ENCODE measurements at regions of chr17 and their contacts with region 1.

Region 1: GRCh38 chr17:35063514-35064223 is at the start of gene RFFL:
- DNase-seq: peak; percentile 60 to 95 (median 84)
- ATAC-seq: peak; percentile 99 to 100 (median 100)
- H3K4me3 ChIP-seq: peak within 1 kb of the TSS; percentile 41 to 42
- H3K4me3 Mint-ChIP-seq: peak within 1 kb of the TSS; percentile 52 to 76 (median 70)
- H3K27ac ChIP-seq: peak within 1 kb of the TSS; percentile 80
- H3K27ac Mint-ChIP-seq: peak within 1 kb of the TSS; percentile 90 to 96
- H3K4me1 ChIP-seq: peaks cover 15 to 27% of the 10 kb centered on the region in 2 experiments
- H3K4me1 Mint-ChIP-seq: peaks cover 71 to 77% (median 72%) of the 10 kb centered on the region in 3 donors
- H3K27me3 ChIP-seq: no peaks in the 10 kb centered on the region
- H3K27me3 Mint-ChIP-seq: no peaks in the 10 kb centered on the region
- total RNA-seq, gene RFFL: 51.3 to 80.2 (median 74.1) TPM

Region 2: GRCh38 chr17:34980681-34981537 is 82.8 kb before region 1 on chr17:
- CTCF ChIA-PET with region 1: interaction called, 3 to 10 read pairs
- POLR2A ChIA-PET with region 1: interaction called in 1 of 2 experiments, 5 read pairs
- DNase-seq: peak in 34 of 35 experiments; percentile 43 to 85 (median 64)
- ATAC-seq: peak; percentile 88 to 93 (median 90)
- H3K4me3 ChIP-seq: peak overlapping the region; percentile 79 to 93
- H3K4me3 Mint-ChIP-seq: peak overlapping the region; percentile 79 to 93 (median 92)
- H3K27ac ChIP-seq: peak overlapping the region; percentile 97
- H3K27ac Mint-ChIP-seq: peak overlapping the region; percentile 92 to 93
- H3K4me1 ChIP-seq: peaks cover 13 to 27% of the 10 kb centered on the region in 2 experiments
- H3K4me1 Mint-ChIP-seq: peaks cover 52 to 58% (median 54%) of the 10 kb centered on the region in 3 donors
- H3K27me3 ChIP-seq: no peaks in the 10 kb centered on the region
- H3K27me3 Mint-ChIP-seq: no peaks in the 10 kb centered on the region

Region 3: GRCh38 chr17:35022536-35023063 is 41.1 kb before region 1 on chr17:
- CTCF ChIA-PET with region 1: interaction called, 3 to 33 read pairs
- POLR2A ChIA-PET with region 1: interaction called, 5 to 6 read pairs
- DNase-seq: peak; percentile 41 to 81 (median 61)
- ATAC-seq: peak; percentile 98 to 100 (median 100)
- H3K4me3 ChIP-seq: no peak overlapping the region
- H3K4me3 Mint-ChIP-seq: peak overlapping the region; percentile 43 to 69 (median 56)
- H3K27ac ChIP-seq: peak overlapping the region; percentile 95
- H3K27ac Mint-ChIP-seq: peak overlapping the region; percentile 98 to 99
- H3K4me1 ChIP-seq: peaks cover 24 to 34% of the 10 kb centered on the region in 2 experiments
- H3K4me1 Mint-ChIP-seq: peaks cover 54 to 66% (median 58%) of the 10 kb centered on the region in 3 donors
- H3K27me3 ChIP-seq: no peaks in the 10 kb centered on the region
- H3K27me3 Mint-ChIP-seq: no peaks in the 10 kb centered on the region

Region 4: DNA sequence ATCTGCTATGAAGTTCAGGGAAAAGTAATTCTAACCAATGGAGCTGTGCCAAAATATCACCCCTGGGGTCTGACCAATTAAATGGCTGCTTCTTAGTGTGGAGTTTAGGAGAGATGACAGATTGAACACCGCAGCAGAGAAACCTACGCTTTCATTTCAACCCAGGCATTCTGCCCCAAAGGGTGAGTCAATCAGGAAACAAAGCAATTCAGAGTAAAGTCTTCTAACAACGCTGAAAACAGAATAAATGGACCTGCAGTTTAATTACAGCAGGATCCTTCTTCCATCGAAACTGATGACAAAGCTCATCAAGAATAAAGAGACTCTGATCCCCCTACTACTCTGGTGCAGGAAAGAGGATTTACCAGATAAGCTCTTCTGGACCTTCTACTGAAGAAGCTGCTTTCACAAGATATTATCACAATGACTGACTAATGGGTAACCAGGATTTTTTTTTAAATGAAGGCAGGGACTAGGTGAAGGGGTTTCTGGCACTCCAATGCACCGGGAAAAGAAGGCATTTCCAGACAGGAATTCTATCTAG is 16.9 kb before region 1 on chr17:
- CTCF ChIA-PET with region 1: interaction called, 7 to 33 read pairs
- POLR2A ChIA-PET with region 1: interaction called, 6 to 10 read pairs
- DNase-seq: peak in 34 of 35 experiments; percentile 18 to 83 (median 57)
- ATAC-seq: peak; percentile 70 to 78 (median 73)
- H3K4me3 ChIP-seq: peak overlapping the region; percentile 17 to 39
- H3K4me3 Mint-ChIP-seq: peak overlapping the region; percentile 72 to 77 (median 76)
- H3K27ac ChIP-seq: peak overlapping the region; percentile 84
- H3K27ac Mint-ChIP-seq: peak overlapping the region; percentile 94 to 98
- H3K4me1 ChIP-seq: peaks cover 55 to 83% of the 10 kb centered on the region in 2 experiments
- H3K4me1 Mint-ChIP-seq: peaks cover 78 to 84% (median 80%) of the 10 kb centered on the region in 3 donors
- H3K27me3 ChIP-seq: no peaks in the 10 kb centered on the region
- H3K27me3 Mint-ChIP-seq: no peaks in the 10 kb centered on the region

Region 5: DNA sequence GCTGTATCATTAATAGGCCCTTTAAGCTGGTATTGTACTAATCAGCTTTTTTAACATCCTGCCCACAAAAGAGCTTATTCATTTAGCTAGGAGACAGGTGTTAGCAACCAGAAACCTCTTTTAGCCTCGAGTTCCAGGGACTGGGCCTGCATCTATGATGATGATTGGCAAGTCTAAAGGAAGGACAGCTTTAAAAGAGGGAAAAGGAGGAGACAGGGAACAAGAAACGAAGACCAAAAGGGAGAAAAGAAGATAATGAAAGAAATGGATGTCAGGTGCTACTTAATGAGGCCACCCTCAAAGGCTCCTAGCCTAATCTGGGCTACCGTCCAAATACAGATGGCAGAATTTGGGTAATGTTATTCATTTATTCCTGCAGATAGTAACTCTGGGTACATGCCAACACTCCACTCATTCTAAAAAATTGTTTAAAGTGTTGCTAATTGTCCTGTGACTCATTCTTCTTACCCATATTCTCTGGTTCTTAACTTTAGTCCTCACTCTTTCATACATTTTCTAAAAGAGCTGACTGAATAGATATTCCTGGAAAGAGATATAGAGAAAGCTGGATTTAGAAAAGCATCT is 18.5 kb after region 1 on chr17:
- CTCF ChIA-PET with region 1: interaction called, 6 to 20 read pairs
- POLR2A ChIA-PET with region 1: interaction called in 1 of 2 experiments, 4 read pairs
- DNase-seq: peak in 1 of 35 experiments; percentile 38
- ATAC-seq: peak; percentile 50 to 74 (median 60)
- H3K4me3 ChIP-seq: no peak overlapping the region
- H3K4me3 Mint-ChIP-seq: peak overlapping the region; percentile 53 to 64 (median 54)
- H3K27ac ChIP-seq: peak overlapping the region; percentile 36
- H3K27ac Mint-ChIP-seq: peak overlapping the region; percentile 88 to 96
- H3K4me1 ChIP-seq: peaks cover 28 to 30% of the 10 kb centered on the region in 2 experiments
- H3K4me1 Mint-ChIP-seq: peaks cover 81 to 87% (median 85%) of the 10 kb centered on the region in 3 donors
- H3K27me3 ChIP-seq: no peaks in the 10 kb centered on the region
- H3K27me3 Mint-ChIP-seq: no peaks in the 10 kb centered on the region

Region 6: GRCh38 chr17:35088881-35089585 is 25.4 kb after region 1 on chr17:
- CTCF ChIA-PET with region 1: interaction called, 3 to 22 read pairs
- POLR2A ChIA-PET with region 1: interaction called in 1 of 2 experiments, 9 read pairs
- DNase-seq: peak; percentile 73 to 95 (median 85)
- ATAC-seq: peak; percentile 79 to 87 (median 81)
- H3K4me3 ChIP-seq: peak overlapping the region; percentile 88 to 89
- H3K4me3 Mint-ChIP-seq: peak overlapping the region; percentile 94 to 95 (median 94)
- H3K27ac ChIP-seq: peak overlapping the region; percentile 98
- H3K27ac Mint-ChIP-seq: peak overlapping the region; percentile 96
- H3K4me1 ChIP-seq: peaks cover 17 to 33% of the 10 kb centered on the region in 2 experiments
- H3K4me1 Mint-ChIP-seq: peaks cover 47 to 54% (median 51%) of the 10 kb centered on the region in 3 donors
- H3K27me3 ChIP-seq: no peaks in the 10 kb centered on the region
- H3K27me3 Mint-ChIP-seq: no peaks in the 10 kb centered on the region

Region 7: DNA sequence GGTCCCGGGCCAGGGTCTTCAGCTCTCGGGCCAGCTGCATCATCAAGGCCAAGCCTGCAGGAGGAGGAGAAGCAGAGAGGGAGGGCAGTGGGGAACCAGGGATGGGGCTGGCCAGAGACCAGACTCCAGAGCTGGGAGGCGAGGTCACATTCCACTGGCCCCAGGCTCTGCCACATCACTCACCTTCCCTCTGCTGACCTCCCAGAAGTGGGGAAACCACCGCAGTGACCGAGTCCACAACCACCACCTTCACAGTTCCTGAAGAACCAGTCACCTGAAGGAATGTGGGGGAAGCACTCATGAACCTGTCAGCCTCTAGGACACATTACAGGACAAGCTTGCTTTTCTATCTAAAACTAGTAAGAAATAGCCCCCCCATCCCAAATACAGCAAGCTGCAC is 39.6 kb after region 1 on chr17:
- CTCF ChIA-PET with region 1: no interaction called
- POLR2A ChIA-PET with region 1: interaction called in 1 of 2 experiments, 10 read pairs
- DNase-seq: no peak
- ATAC-seq: no peak
- H3K4me3 ChIP-seq: no peak overlapping the region
- H3K4me3 Mint-ChIP-seq: no peak overlapping the region
- H3K27ac ChIP-seq: no peak overlapping the region
- H3K27ac Mint-ChIP-seq: no peak overlapping the region
- H3K4me1 ChIP-seq: no peaks in the 10 kb centered on the region
- H3K4me1 Mint-ChIP-seq: peaks cover 0 to 7% (median 0%) of the 10 kb centered on the region in 3 donors
- H3K27me3 ChIP-seq: no peaks in the 10 kb centered on the region
- H3K27me3 Mint-ChIP-seq: no peaks in the 10 kb centered on the region

Region 8: DNA sequence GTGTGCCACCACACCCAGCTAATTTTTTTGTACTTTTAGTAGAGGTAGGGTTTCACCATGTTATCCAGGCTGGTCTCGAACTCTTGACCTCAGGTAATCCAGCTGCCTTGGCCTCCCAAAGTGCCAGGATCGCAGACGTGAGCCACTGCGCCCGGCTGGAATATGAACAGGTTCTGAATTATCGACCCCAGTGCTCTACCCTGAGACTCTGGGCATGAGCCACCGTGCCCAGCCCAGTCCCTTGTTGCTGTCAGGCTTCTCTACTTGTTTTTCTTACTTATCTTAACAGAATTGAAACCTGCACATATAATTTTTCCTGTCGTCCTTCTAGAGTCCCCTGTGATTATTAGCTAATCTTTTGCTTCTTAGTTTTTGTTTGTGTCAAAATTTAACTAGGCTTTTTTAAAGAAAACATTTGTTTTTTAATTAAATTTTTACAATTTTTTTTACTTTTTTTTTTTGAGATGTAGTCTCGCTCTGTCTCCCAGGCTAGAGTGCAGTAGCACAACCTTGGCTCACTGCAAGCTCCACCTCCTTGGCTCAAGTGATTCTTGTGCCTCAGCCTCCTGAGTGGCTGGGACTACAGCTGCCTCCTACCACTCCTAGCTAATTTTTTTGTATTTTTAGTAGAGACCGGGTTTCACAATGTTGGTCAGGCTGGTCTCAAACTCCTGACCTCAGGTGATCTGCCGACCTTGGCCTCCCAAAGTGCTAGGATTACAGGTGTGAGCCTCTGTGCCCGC is 590.1 kb after region 1 on chr17:
- CTCF ChIA-PET with region 1: no interaction called
- POLR2A ChIA-PET with region 1: no interaction called
- DNase-seq: no peak
- ATAC-seq: no peak
- H3K4me3 ChIP-seq: no peak overlapping the region
- H3K4me3 Mint-ChIP-seq: no peak overlapping the region
- H3K27ac ChIP-seq: no peak overlapping the region
- H3K27ac Mint-ChIP-seq: no peak overlapping the region
- H3K4me1 ChIP-seq: no peaks in the 10 kb centered on the region
- H3K4me1 Mint-ChIP-seq: peaks cover 6 to 19% (median 13%) of the 10 kb centered on the region in 3 donors
- H3K27me3 ChIP-seq: no peaks in the 10 kb centered on the region
- H3K27me3 Mint-ChIP-seq: no peaks in the 10 kb centered on the region